ENCODE measurements at regions of chr2 and their contacts with region 1.

Region 1: DNA sequence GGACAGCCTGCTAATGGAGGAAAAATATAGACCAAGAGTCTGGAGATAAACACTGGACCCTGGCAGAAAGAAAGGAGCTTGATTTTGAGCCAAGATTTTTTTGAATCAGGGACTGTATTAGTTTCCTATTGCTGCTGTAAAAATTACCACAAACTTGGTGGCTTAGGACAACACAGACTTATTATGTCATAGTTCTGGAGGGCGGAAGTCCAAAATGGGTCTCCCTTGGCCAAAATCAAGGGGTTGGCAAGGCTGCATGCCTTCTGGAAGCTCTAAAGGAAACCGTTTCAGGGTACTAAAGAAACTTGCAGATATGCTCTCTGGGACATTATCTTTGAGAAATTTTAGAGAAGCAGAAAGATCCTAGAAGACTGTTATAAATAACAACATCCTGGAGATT is 140.1 kb downstream of the BABAM2 start:
- DNase-seq: no peak
- H3K4me3 ChIP-seq: no peak overlapping the region
- CTCF ChIP-seq: no peak

Region 2: GRCh38 chr2:27779417-27780055 is 251.1 kb before region 1 on chr2:
- in situ Hi-C with region 1: no loop called
- DNase-seq: no peak
- H3K4me3 ChIP-seq: no peak overlapping the region
- CTCF ChIP-seq: no peak

Region 3: DNA sequence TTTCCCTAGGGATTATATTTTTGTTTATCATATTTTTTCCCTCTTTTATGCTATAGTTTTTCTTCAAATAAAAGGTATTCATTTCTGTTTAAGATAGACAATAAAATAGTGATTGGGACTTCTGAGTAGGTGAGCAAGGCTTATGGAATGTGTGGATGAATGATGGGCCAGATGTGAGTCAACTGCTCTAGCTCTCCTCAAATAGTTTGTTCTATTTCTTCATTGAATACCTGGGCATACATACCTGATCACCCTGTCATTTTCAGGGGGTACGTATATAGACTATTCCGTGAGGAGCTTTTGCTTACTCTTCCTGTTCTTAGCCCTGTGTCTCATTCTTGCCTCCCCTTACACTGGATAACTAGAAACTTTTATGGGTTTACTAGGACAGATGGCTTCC is 98.2 kb before region 1 on chr2:
- in situ Hi-C with region 1: loop called (anchors 10 kb)
- DNase-seq: no peak
- H3K4me3 ChIP-seq: no peak overlapping the region
- CTCF ChIP-seq: no peak

Region 4: DNA sequence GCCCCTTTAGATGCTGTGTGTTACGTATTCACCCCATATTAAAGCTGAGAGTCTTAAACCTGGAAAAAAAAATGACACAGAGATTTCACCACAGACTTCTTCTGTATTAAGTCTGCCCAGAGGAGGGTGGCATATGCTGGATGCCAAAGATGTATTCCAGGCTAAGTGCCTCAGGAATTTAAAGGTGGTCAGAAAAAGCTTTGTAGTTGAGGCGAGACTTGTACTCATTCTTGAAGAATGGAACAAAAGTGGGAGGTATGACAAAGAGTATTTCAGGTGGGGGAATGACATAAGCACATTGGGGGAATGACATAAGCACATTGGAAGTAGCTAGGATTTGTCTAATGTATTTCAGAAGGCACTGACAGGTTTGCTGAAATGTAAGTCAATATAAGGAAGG is 41.5 kb before region 1 on chr2:
- in situ Hi-C with region 1: loop called (anchors 5 kb)
- DNase-seq: no peak
- H3K4me3 ChIP-seq: no peak overlapping the region
- CTCF ChIP-seq: no peak